Mammary epithelial cell (primary cell): ENCODE measurements at regions of chr1 and their contacts with region 1.

Region 1: GRCh38 chr1:147414500-147415163 is 126.7 kb upstream of the BCL9 start:
- DNase-seq: no peak
- H3K4me3 ChIP-seq: no peak overlapping the region
- H3K27ac ChIP-seq: no peak overlapping the region
- H3K4me1 ChIP-seq: no peaks in the 10 kb centered on the region
- H3K27me3 ChIP-seq: peaks cover 2% of the 10 kb centered on the region
- CTCF ChIP-seq: no peak

Region 2: GRCh38 chr1:147466543-147466942 is 51.9 kb after region 1 on chr1:
- CTCF ChIA-PET with region 1: no interaction called
- dilution Hi-C with region 1: loop called (anchors 5 kb)
- in situ Hi-C with region 1: no loop called
- intact Hi-C with region 1: no loop called
- DNase-seq: no peak
- H3K4me3 ChIP-seq: no peak overlapping the region
- H3K27ac ChIP-seq: no peak overlapping the region
- H3K4me1 ChIP-seq: no peaks in the 10 kb centered on the region
- H3K27me3 ChIP-seq: peaks cover 5% of the 10 kb centered on the region
- CTCF ChIP-seq: no peak